ENCODE measurements at regions of chr2 and their contacts with region 1.

Region 1: GRCh38 chr2:201231781-201232466 is 28.4 kb upstream of the CASP8 start:
- DNase-seq: peak; percentile 93
- ATAC-seq: peak; percentile 56
- H3K4me3 ChIP-seq: peak overlapping the region in 3 of 5 experiments; percentile 3 to 43 (median 25)
- H3K4me3 Mint-ChIP-seq: peak overlapping the region; percentile 94
- H3K27ac ChIP-seq: peak overlapping the region in 1 of 2 donors; percentile 24
- H3K27ac Mint-ChIP-seq: peak overlapping the region; percentile 84
- H3K4me1 ChIP-seq: peaks cover 41 to 49% of the 10 kb centered on the region in 2 donors
- H3K4me1 Mint-ChIP-seq: peaks cover 53% of the 10 kb centered on the region
- H3K27me3 ChIP-seq: no peaks in the 10 kb centered on the region
- H3K27me3 Mint-ChIP-seq: no peaks in the 10 kb centered on the region
- CTCF ChIP-seq: peak; percentile 97

Region 2: DNA sequence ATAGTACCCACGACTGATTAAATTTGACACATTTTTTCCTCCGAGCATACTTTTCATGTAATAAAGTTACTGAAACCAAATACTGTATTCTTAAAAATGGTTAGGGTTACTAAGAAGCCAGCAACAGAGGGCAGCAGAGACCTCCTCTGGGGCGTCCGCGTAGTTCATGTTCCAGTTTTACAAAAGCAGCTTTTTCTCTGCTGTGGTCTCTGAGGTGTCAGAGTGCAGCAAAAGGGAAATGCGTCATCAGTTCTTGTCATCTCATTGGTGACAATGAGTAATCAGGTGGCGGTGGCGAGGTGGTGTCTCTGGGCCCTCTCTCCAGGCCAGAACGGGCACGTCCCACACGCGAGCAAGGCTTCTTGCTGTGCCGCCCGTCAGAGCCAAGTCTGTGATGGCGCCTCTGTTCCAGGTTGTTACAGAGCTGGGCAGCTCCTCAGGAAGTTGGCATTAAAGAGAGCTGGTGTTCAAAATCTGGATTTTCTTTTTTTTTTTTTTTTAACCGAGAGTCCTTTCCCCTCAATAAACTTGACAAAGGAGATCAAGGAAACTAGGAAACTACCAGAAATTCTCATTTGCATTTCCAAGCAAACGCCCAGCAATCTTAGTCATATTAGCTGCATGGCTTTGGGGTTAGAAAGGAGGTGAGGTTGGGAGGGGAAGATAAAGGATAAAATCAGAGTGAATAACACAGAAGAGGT is 518.8 kb before region 1 on chr2:
- CTCF ChIA-PET with region 1: interaction called, 7 read pairs
- POLR2A ChIA-PET with region 1: no interaction called
- intact Hi-C with region 1: loop called (anchors 1 kb)
- DNase-seq: peak; percentile 91
- ATAC-seq: peak; percentile 99
- H3K4me3 ChIP-seq: peak overlapping the region in 4 of 5 experiments; percentile 5 to 52 (median 16)
- H3K4me3 Mint-ChIP-seq: peak overlapping the region; percentile 83
- H3K27ac ChIP-seq: peak overlapping the region; percentile 82 to 93
- H3K27ac Mint-ChIP-seq: peak overlapping the region; percentile 98
- H3K4me1 ChIP-seq: peaks cover 5 to 6% of the 10 kb centered on the region in 2 donors
- H3K4me1 Mint-ChIP-seq: peaks cover 15% of the 10 kb centered on the region
- H3K27me3 ChIP-seq: no peaks in the 10 kb centered on the region
- H3K27me3 Mint-ChIP-seq: peaks cover 10% of the 10 kb centered on the region
- CTCF ChIP-seq: peak; percentile 83

Region 3: DNA sequence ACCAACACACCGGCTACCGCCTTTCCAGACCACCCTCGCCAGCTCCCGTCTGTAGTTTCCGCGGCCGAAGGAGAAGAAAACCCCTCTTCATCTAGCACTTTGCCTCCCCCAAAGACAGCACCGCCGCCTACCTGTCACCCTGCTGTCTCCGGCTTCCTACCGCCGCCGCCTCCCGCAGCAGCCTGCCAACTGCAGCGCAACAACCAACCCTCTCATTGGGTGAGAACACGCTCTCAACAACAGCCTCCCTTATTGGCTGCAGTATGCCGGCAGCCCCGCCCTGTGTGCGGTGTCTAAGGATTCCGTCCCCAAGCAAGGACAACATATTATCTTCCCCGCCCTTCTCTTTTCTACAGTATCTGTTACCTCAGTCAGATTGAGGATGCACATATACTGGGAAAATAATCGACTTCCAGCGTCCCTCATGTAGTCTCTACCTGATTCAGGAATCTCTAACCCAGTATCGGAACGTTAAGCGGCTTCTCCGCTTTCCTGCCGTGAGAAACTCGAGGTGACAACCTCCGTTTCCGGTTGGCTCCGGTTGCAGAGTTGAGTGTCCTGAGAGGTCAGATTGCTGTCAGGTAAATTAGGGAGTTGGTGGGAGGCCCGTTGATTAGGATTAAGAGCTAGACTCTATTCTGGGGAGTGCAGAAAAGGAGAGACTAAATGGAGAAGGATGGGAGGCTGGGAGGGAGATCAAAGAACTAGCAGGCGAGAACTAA is 160.3 kb before region 1 on chr2 and contains the starts of genes HYCC2 and NDUFB3:
- CTCF ChIA-PET with region 1: interaction called, 41 read pairs
- POLR2A ChIA-PET with region 1: no interaction called
- intact Hi-C with region 1: loop called (anchors 1 kb)
- DNase-seq: peak; percentile 98
- ATAC-seq: peak; percentile 97
- H3K4me3 ChIP-seq: peak within 1 kb of the TSS; percentile 61 to 92 (median 86)
- H3K4me3 Mint-ChIP-seq: peak within 1 kb of the TSS; percentile 91
- H3K27ac ChIP-seq: peak within 1 kb of the TSS; percentile 58 to 91
- H3K27ac Mint-ChIP-seq: peak within 1 kb of the TSS; percentile 98
- H3K4me1 ChIP-seq: peaks cover 18 to 27% of the 10 kb centered on the region in 2 donors
- H3K4me1 Mint-ChIP-seq: peaks cover 39% of the 10 kb centered on the region
- H3K27me3 ChIP-seq: no peaks in the 10 kb centered on the region
- H3K27me3 Mint-ChIP-seq: no peaks in the 10 kb centered on the region
- CTCF ChIP-seq: peak; percentile 40
- total RNA-seq, gene HYCC2: 30.1 and 32.4 TPM in 2 replicates
- total RNA-seq, gene NDUFB3: 35.1 and 44.7 TPM in 2 replicates

Region 4: DNA sequence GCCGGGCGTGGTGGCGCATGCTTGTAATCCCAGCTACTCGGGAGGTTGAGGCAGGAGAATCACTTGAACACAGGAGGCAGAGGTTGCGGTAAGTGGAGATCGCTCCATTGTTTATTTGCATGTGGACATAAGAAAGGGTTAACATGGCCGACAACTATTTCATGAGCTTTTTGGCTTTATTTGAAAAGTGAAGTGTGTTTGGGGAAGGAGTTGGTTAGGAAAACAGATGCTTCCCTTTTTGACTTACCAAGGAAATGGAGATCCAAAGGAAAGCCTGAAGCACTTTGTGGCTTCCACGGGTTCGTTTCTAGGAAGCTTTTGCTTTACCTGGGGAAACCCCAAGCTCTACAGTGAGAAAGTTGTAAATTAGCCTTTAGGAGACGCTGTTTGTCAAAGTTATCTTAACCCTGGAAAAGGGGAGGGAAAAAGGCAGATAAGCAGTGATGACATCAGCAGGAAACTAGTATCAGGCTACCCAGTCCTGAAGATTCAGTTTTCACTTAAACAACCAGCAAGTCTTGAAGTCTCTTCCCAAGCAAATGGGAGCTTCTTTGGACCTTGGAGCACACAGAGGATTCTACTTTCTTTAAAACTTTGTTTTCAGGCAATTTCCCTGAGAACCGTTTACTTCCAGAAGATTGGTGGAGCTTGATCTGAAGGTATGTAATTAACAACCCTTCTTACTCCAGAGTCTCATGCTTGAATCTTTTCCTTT is 49.1 kb before region 1 on chr2 and contains the start of gene CASP10:
- CTCF ChIA-PET with region 1: interaction called, 347 read pairs
- POLR2A ChIA-PET with region 1: interaction called, 17 read pairs
- intact Hi-C with region 1: loop called (anchors 1 kb)
- DNase-seq: peak; percentile 85
- ATAC-seq: peak; percentile 84
- H3K4me3 ChIP-seq: peak within 1 kb of the TSS; percentile 64 to 96 (median 79)
- H3K4me3 Mint-ChIP-seq: peak within 1 kb of the TSS; percentile 96
- H3K27ac ChIP-seq: peak within 1 kb of the TSS; percentile 33 to 71
- H3K27ac Mint-ChIP-seq: peak within 1 kb of the TSS; percentile 86
- H3K4me1 ChIP-seq: peaks cover 30 to 37% of the 10 kb centered on the region in 2 donors
- H3K4me1 Mint-ChIP-seq: peaks cover 46% of the 10 kb centered on the region
- H3K27me3 ChIP-seq: no peaks in the 10 kb centered on the region
- H3K27me3 Mint-ChIP-seq: no peaks in the 10 kb centered on the region
- CTCF ChIP-seq: peak; percentile 71
- total RNA-seq, gene CASP10: 33.7 and 34.3 TPM in 2 replicates

Region 5: GRCh38 chr2:201242571-201243277 is 10.8 kb after region 1 on chr2:
- CTCF ChIA-PET with region 1: interaction called, 14 read pairs
- POLR2A ChIA-PET with region 1: no interaction called
- intact Hi-C with region 1: no loop called
- DNase-seq: no peak
- ATAC-seq: no peak
- H3K4me3 ChIP-seq: peak overlapping the region in 1 of 5 experiments; percentile 33
- H3K4me3 Mint-ChIP-seq: peak overlapping the region; percentile 14
- H3K27ac ChIP-seq: peak overlapping the region; percentile 27 to 42
- H3K27ac Mint-ChIP-seq: peak overlapping the region; percentile 46
- H3K4me1 ChIP-seq: peaks cover 47 to 48% of the 10 kb centered on the region in 2 donors
- H3K4me1 Mint-ChIP-seq: peaks cover 74% of the 10 kb centered on the region
- H3K27me3 ChIP-seq: no peaks in the 10 kb centered on the region
- H3K27me3 Mint-ChIP-seq: no peaks in the 10 kb centered on the region
- CTCF ChIP-seq: no peak

Region 6: GRCh38 chr2:201275990-201276389 is 44.1 kb after region 1 on chr2:
- CTCF ChIA-PET with region 1: interaction called, 16 read pairs
- POLR2A ChIA-PET with region 1: interaction called, 5 read pairs
- intact Hi-C with region 1: loop called (anchors 2 kb)
- DNase-seq: no peak
- ATAC-seq: no peak
- H3K4me3 ChIP-seq: no peak overlapping the region
- H3K4me3 Mint-ChIP-seq: no peak overlapping the region
- H3K27ac ChIP-seq: no peak overlapping the region
- H3K27ac Mint-ChIP-seq: peak overlapping the region; percentile 53
- H3K4me1 ChIP-seq: peaks cover 10 to 18% of the 10 kb centered on the region in 2 donors
- H3K4me1 Mint-ChIP-seq: peaks cover 27% of the 10 kb centered on the region
- H3K27me3 ChIP-seq: no peaks in the 10 kb centered on the region
- H3K27me3 Mint-ChIP-seq: no peaks in the 10 kb centered on the region
- CTCF ChIP-seq: no peak

Region 7: GRCh38 chr2:202033321-202034248 is 801.7 kb after region 1 on chr2 and contains the start of gene FZD7:
- CTCF ChIA-PET with region 1: no interaction called
- POLR2A ChIA-PET with region 1: no interaction called
- intact Hi-C with region 1: loop called (anchors 10 kb)
- DNase-seq: peak; percentile 90
- ATAC-seq: peak; percentile 85
- H3K4me3 ChIP-seq: peak within 1 kb of the TSS; percentile 63 to 89 (median 75)
- H3K4me3 Mint-ChIP-seq: peak within 1 kb of the TSS; percentile 91
- H3K27ac ChIP-seq: no peak within 1 kb of the TSS
- H3K27ac Mint-ChIP-seq: peak within 1 kb of the TSS; percentile 78
- H3K4me1 ChIP-seq: peaks cover 20 to 25% of the 10 kb centered on the region in 2 donors
- H3K4me1 Mint-ChIP-seq: peaks cover 13% of the 10 kb centered on the region
- H3K27me3 ChIP-seq: peaks cover 0 to 43% (median 32%) of the 10 kb centered on the region in 4 experiments
- H3K27me3 Mint-ChIP-seq: peaks cover 22% of the 10 kb centered on the region
- CTCF ChIP-seq: no peak
- total RNA-seq, gene FZD7: 2.1 TPM in 2 replicates

Measured in B cell (primary cell).